ENCODE measurements at regions of chr3 and their contacts with region 1.

Region 1: GRCh38 chr3:66407611-66408218 is 93.1 kb downstream of the LRIG1 start:
- DNase-seq: peak; percentile 90
- ATAC-seq: peak; percentile 86
- H3K4me3 Mint-ChIP-seq: no peak overlapping the region
- H3K27ac Mint-ChIP-seq: peak overlapping the region; percentile 66
- H3K4me1 Mint-ChIP-seq: peaks cover 46% of the 10 kb centered on the region
- H3K27me3 Mint-ChIP-seq: no peaks in the 10 kb centered on the region
- CTCF ChIP-seq: peak; percentile 95

Region 2: GRCh38 chr3:65732051-65732935 is 675.4 kb before region 1 on chr3:
- CTCF ChIA-PET with region 1: no interaction called
- POLR2A ChIA-PET with region 1: no interaction called
- DNase-seq: no peak
- ATAC-seq: peak; percentile 86
- H3K4me3 Mint-ChIP-seq: no peak overlapping the region
- H3K27ac Mint-ChIP-seq: peak overlapping the region; percentile 51; the same call in 1 of the 2 replicates
- H3K4me1 Mint-ChIP-seq: peaks cover 54% of the 10 kb centered on the region
- H3K27me3 Mint-ChIP-seq: no peaks in the 10 kb centered on the region
- CTCF ChIP-seq: peak; percentile 40; the same call in 1 of the 2 replicates

Region 3: DNA sequence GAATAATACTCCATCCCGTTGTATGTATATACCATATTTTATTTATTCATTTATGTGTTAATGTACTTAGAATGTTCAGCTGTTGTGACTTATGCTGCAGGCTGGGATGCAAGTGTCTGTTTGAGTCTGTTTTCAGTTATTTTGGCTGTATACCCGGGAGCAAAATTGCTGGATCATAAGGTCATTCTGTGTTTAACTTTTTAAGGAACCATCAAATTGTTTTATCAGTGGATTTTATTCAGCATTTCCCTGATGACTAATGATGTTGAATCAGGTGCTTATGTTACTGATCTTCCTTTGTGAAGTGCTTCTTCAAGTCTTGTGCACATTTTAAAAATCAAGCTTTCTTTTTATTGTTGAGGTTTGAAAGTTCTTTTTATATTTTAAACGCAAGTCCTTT is 68.8 kb before region 1 on chr3:
- CTCF ChIA-PET with region 1: no interaction called
- POLR2A ChIA-PET with region 1: no interaction called
- DNase-seq: no peak
- ATAC-seq: no peak
- H3K4me3 Mint-ChIP-seq: no peak overlapping the region
- H3K27ac Mint-ChIP-seq: no peak overlapping the region
- H3K4me1 Mint-ChIP-seq: peaks cover 22% of the 10 kb centered on the region
- H3K27me3 Mint-ChIP-seq: no peaks in the 10 kb centered on the region
- CTCF ChIP-seq: no peak

Region 4: GRCh38 chr3:66378256-66378823 is 29.4 kb before region 1 on chr3:
- CTCF ChIA-PET with region 1: interaction called, 16 read pairs
- POLR2A ChIA-PET with region 1: no interaction called
- DNase-seq: peak; percentile 67
- ATAC-seq: peak; percentile 81
- H3K4me3 Mint-ChIP-seq: no peak overlapping the region
- H3K27ac Mint-ChIP-seq: peak overlapping the region; percentile 79
- H3K4me1 Mint-ChIP-seq: peaks cover 15% of the 10 kb centered on the region
- H3K27me3 Mint-ChIP-seq: no peaks in the 10 kb centered on the region
- CTCF ChIP-seq: no peak

Region 5: GRCh38 chr3:66428733-66429132 is 21.0 kb after region 1 on chr3:
- CTCF ChIA-PET with region 1: interaction called, 11 read pairs
- POLR2A ChIA-PET with region 1: no interaction called
- DNase-seq: no peak
- ATAC-seq: peak; percentile 18; the same call in 1 of the 2 replicates
- H3K4me3 Mint-ChIP-seq: no peak overlapping the region
- H3K27ac Mint-ChIP-seq: peak overlapping the region; percentile 76
- H3K4me1 Mint-ChIP-seq: peaks cover 86% of the 10 kb centered on the region
- H3K27me3 Mint-ChIP-seq: no peaks in the 10 kb centered on the region
- CTCF ChIP-seq: no peak

Region 6: DNA sequence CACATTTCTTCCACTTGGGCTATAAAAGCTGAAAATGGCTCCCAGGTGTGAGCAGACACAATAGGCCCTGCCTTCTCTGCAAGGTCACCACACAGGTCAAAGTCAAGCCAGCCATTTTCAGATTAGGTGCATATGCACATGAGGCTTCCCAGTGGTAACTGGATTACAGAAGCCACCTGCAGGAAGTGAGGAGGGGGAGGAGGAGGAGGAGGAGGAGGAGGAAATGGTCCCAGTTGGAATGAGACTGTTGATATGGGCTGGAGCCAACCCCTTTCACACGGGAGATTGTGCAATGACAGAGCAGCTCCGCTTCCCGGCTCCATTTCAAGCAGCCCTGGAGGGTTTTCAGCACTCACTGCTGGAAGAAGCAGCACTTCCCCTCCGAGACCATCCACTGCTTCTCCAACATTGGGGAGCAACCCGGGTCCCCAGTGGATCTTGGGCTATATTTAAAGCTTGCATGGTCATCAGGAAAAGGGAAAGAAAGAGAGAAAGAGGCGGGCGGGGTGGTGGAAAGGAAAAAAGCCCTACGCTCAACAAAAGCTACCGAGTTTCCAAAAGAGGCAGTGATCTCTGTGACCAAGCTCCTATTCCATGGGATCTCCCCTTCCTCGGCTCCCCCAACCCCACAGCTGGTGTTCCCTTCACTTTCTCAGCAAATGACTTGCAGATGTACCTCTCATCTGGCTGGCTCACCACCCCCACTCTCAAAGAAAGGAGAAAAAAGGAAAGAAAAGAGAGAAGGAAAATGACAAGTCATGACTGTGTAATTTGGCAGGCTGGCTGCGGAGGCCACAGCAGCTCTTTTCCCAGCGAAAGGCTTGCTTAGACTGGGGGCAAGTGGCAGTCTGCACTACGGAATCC is 34.8 kb after region 1 on chr3:
- CTCF ChIA-PET with region 1: interaction called, 22 read pairs
- POLR2A ChIA-PET with region 1: interaction called, 3 read pairs
- DNase-seq: peak; percentile 70
- ATAC-seq: peak; percentile 82
- H3K4me3 Mint-ChIP-seq: peak overlapping the region; percentile 74
- H3K27ac Mint-ChIP-seq: peak overlapping the region; percentile 100
- H3K4me1 Mint-ChIP-seq: peaks cover 93% of the 10 kb centered on the region
- H3K27me3 Mint-ChIP-seq: no peaks in the 10 kb centered on the region
- CTCF ChIP-seq: no peak

Region 7: DNA sequence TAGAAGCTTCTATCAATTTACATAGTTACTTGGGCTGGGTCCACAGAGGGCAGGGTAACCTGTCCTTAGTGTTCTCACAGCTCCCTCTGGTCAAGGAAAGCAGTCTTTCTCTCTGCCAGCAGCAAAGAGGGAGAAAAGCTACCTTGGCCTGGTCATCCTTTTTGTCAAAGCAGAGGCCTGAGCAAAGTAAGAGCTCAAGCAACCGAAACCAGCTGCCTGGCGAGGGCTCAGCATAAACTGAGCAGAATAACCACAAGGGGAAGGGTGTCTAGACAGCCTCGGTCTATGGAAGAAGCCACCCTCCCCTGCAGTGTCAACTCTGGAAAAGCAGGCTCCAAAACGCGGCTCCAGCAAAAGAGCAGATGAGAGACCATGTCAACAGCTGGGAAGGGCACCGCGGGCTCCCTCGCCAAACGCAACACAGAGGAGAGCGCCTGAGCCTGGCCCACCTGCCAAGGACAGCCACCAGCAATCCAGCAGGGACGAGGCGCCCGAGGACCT is 75.7 kb after region 1 on chr3:
- CTCF ChIA-PET with region 1: interaction called, 12 read pairs
- POLR2A ChIA-PET with region 1: no interaction called
- DNase-seq: peak; percentile 26
- ATAC-seq: peak; percentile 31
- H3K4me3 Mint-ChIP-seq: peak overlapping the region; percentile 3; the same call in 1 of the 2 replicates
- H3K27ac Mint-ChIP-seq: peak overlapping the region; percentile 48
- H3K4me1 Mint-ChIP-seq: peaks cover 51% of the 10 kb centered on the region
- H3K27me3 Mint-ChIP-seq: no peaks in the 10 kb centered on the region
- CTCF ChIP-seq: no peak

Region 8: DNA sequence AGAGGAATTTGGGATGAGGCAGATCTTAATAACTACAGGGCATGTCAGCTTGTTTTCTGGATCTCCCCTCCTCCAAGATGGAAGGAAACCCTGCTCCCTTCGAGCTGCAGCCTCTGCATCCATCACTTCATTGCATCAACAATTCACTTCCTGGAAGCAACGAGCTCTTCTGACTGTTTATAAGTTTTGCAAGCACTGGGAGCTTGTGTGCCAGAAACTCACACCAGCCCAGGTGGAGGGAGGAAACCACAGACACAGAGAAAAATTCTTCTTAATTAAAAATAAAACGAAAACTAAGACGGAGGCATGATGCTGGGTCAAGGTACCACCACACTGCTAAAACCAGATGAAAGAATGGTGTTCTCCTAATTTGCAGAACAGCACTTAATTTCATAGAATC is 82.5 kb after region 1 on chr3:
- CTCF ChIA-PET with region 1: interaction called, 14 read pairs
- POLR2A ChIA-PET with region 1: no interaction called
- DNase-seq: no peak
- ATAC-seq: no peak
- H3K4me3 Mint-ChIP-seq: peak overlapping the region; percentile 28
- H3K27ac Mint-ChIP-seq: no peak overlapping the region
- H3K4me1 Mint-ChIP-seq: peaks cover 95% of the 10 kb centered on the region
- H3K27me3 Mint-ChIP-seq: no peaks in the 10 kb centered on the region
- CTCF ChIP-seq: no peak

Region 9: DNA sequence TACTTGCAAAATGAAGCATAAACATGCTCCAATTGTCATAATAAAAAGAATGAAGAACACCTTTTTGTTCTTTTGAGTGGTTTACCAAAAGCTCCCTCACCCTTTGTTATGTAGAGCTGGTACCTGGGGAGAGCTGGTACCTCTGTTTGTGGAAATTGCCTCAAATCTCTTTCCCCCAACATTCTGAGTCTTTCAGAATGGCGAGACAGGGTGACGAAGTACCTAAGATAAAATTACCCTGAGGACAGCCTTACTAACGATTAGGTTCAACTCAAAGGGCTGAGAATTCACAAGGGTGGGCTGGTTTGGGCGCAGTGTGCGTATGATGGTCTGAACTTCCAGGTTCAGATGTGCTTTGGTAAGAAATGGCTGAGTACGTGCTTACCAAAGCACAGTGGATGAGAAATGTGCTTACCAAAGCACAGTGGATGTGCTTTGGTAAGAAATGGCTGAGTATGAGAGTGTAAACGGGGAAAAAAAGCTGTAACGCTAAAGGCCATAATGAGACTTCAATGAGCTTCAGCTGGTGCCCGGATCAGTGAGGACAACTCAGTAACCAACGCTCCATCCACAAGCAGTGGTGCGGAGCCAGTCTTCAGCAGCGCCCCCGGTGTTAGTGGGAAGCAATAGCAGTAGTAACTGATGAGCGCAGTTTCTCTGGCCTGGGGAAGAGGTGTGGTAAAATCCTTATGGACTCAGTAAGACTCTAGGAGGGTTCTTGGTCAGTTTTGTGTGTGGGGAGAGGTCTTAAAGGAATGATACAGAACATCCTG is 165.4 kb after region 1 on chr3:
- CTCF ChIA-PET with region 1: interaction called, 15 read pairs
- POLR2A ChIA-PET with region 1: no interaction called
- DNase-seq: peak; percentile 87
- ATAC-seq: peak; percentile 97
- H3K4me3 Mint-ChIP-seq: peak overlapping the region; percentile 53
- H3K27ac Mint-ChIP-seq: peak overlapping the region; percentile 95
- H3K4me1 Mint-ChIP-seq: peaks cover 28% of the 10 kb centered on the region
- H3K27me3 Mint-ChIP-seq: peaks cover 45% of the 10 kb centered on the region
- CTCF ChIP-seq: peak; percentile 69

Measured in WTC11 (cell line).